AG04450 (cell line): ENCODE measurements at regions of chr17 and their contacts with region 1.

Region 1: GRCh38 chr17:80981062-80981902 is 10.4 kb upstream of the CHMP6 start:
- DNase-seq: no peak
- H3K4me3 ChIP-seq: peak overlapping the region; percentile 43; the same call in 1 of the 2 replicates
- H3K27ac ChIP-seq: no peak overlapping the region
- H3K27me3 ChIP-seq: no peaks in the 10 kb centered on the region
- CTCF ChIP-seq: peak; percentile 44

Region 2: DNA sequence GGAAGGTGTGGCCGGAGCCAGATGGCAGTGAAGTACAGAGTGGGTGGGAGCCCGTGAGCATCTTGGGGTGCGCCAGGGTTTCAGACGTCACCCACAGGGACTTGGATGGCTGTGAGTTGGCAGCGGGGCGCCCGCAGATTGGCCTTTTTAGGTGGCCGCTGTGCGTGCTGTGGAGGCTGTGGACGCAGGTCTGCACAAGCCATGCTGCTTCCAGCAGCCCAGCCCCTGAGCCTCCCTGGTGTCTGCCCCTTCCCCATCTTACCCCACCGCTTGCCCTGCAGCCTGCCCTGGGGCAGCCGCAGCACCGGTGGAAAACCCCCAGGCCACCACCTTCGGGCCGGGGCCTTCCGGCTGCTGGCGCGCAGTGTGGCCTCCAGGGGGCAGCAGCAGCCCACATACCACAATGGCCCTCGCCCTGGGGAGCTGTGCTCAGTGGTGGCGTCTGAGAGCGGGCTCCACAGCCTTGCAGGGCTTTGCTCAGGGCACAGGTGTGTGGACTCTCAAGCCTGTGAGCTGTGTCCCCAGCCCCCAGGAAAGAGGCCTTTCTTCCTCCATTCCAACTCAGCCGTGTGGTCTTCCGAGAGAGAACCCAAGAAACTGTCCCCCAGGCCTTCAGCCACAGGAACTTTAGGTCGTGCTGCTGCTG is 554.5 kb before region 1 on chr17:
- CTCF ChIA-PET with region 1: interaction called, 12 read pairs
- POLR2A ChIA-PET with region 1: no interaction called
- DNase-seq: peak; percentile 16
- H3K4me3 ChIP-seq: no peak overlapping the region
- H3K27ac ChIP-seq: no peak overlapping the region
- H3K27me3 ChIP-seq: no peaks in the 10 kb centered on the region
- CTCF ChIP-seq: peak; percentile 93

Region 3: DNA sequence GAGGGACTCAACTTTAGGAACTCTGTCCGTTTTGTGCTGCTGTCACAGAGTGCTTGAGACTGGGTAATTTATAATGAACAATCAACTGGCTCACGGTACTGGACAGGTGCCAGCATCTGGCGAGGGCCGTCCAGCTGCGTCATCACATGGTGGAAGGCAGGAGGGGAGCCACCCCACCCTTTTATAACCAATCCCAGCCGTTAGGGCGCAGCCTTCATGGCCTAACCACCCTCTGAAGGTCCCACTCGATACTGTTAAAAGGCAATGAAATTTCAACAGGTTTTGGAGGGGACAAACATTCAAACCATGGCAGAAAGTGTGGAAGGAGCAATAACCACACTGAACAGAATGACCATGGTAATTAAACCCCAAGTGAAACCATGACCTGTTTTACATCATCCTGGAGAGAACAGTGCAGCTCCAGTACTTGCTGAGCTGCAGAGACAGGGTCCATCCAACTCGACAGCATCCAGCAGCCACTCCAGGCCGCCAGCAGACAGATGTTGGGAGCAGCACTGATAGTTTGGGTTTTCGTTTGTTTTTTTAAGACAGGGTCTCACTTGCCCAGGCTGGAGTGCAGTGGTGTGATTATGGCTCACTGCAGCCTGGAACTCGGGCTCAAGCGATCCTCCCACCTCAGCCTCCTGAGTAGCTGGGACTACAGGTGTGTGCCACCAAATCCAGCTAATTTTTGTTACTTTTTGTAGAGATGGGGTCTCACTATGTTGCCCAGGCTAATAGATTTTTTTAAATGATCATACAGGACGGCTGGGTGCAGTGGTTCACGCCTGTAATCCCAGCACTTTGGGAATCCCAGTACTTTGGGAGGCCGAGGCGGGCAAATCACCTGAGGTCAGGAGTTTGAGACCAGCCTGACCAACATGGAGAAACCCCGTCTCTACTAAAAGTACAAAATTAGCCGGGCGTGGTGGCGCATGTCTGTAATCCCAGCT is 21.4 kb after region 1 on chr17:
- CTCF ChIA-PET with region 1: no interaction called
- POLR2A ChIA-PET with region 1: no interaction called
- DNase-seq: no peak
- H3K4me3 ChIP-seq: no peak overlapping the region
- H3K27ac ChIP-seq: no peak overlapping the region
- H3K27me3 ChIP-seq: peaks cover 24% of the 10 kb centered on the region
- CTCF ChIP-seq: no peak